CD4-positive, alpha-beta memory T cell (primary cell): ENCODE measurements at regions of chr5 and their contacts with region 1.

Region 1: GRCh38 chr5:148957591-148958202 is 105.2 kb downstream of the SH3TC2 start:
- DNase-seq: peak; percentile 31 to 45 (median 40)
- H3K4me3 ChIP-seq: no peak overlapping the region
- H3K4me3 Mint-ChIP-seq: no peak overlapping the region
- H3K27ac ChIP-seq: no peak overlapping the region
- H3K27ac Mint-ChIP-seq: no peak overlapping the region
- H3K4me1 ChIP-seq: no peaks in the 10 kb centered on the region
- H3K4me1 Mint-ChIP-seq: peaks cover 0 to 3% (median under 1%) of the 10 kb centered on the region in 4 donors
- H3K27me3 ChIP-seq: no peaks in the 10 kb centered on the region
- H3K27me3 Mint-ChIP-seq: peaks cover 0 to 3% of the 10 kb centered on the region in 2 donors

Region 2: GRCh38 chr5:148740966-148741742 is 216.5 kb before region 1 on chr5:
- CTCF ChIA-PET with region 1: interaction called, 228 read pairs
- POLR2A ChIA-PET with region 1: interaction called, 3 read pairs
- intact Hi-C with region 1: loop called (anchors 1 kb)
- DNase-seq: peak in 4 of 5 donors; percentile 28 to 35 (median 32)
- H3K4me3 ChIP-seq: no peak overlapping the region
- H3K4me3 Mint-ChIP-seq: no peak overlapping the region
- H3K27ac ChIP-seq: no peak overlapping the region
- H3K27ac Mint-ChIP-seq: no peak overlapping the region
- H3K4me1 ChIP-seq: no peaks in the 10 kb centered on the region
- H3K4me1 Mint-ChIP-seq: no peaks in the 10 kb centered on the region
- H3K27me3 ChIP-seq: no peaks in the 10 kb centered on the region
- H3K27me3 Mint-ChIP-seq: peaks cover 4 to 15% of the 10 kb centered on the region in 2 donors

Region 3: GRCh38 chr5:148805326-148806290 is 152.1 kb before region 1 on chr5:
- CTCF ChIA-PET with region 1: interaction called, 16 read pairs
- POLR2A ChIA-PET with region 1: no interaction called
- intact Hi-C with region 1: no loop called
- DNase-seq: no peak
- H3K4me3 ChIP-seq: no peak overlapping the region
- H3K4me3 Mint-ChIP-seq: peak overlapping the region in 1 of 8 donors; percentile 51
- H3K27ac ChIP-seq: no peak overlapping the region
- H3K27ac Mint-ChIP-seq: peak overlapping the region in 2 of 7 donors; percentile 23 to 43
- H3K4me1 ChIP-seq: peaks cover 24% of the 10 kb centered on the region
- H3K4me1 Mint-ChIP-seq: peaks cover 17 to 33% (median 25%) of the 10 kb centered on the region in 4 donors
- H3K27me3 ChIP-seq: no peaks in the 10 kb centered on the region
- H3K27me3 Mint-ChIP-seq: peaks cover 4 to 12% of the 10 kb centered on the region in 2 donors

Region 4: GRCh38 chr5:148826053-148826738 is 131.5 kb before region 1 on chr5 and contains the start of gene ADRB2:
- CTCF ChIA-PET with region 1: interaction called, 77 read pairs
- POLR2A ChIA-PET with region 1: interaction called, 9 read pairs
- intact Hi-C with region 1: loop called (anchors 1 kb)
- DNase-seq: peak; percentile 87 to 93 (median 88)
- H3K4me3 ChIP-seq: peak within 1 kb of the TSS; percentile 72 to 92
- H3K4me3 Mint-ChIP-seq: peak within 1 kb of the TSS; percentile 86 to 95 (median 90)
- H3K27ac ChIP-seq: peak within 1 kb of the TSS; percentile 67
- H3K27ac Mint-ChIP-seq: peak within 1 kb of the TSS; percentile 79 to 97 (median 93)
- H3K4me1 ChIP-seq: peaks cover 39% of the 10 kb centered on the region
- H3K4me1 Mint-ChIP-seq: peaks cover 19 to 61% (median 35%) of the 10 kb centered on the region in 4 donors
- H3K27me3 ChIP-seq: no peaks in the 10 kb centered on the region
- H3K27me3 Mint-ChIP-seq: no peaks in the 10 kb centered on the region
- total RNA-seq, gene ADRB2: 5.6 to 6.1 TPM

Region 5: DNA sequence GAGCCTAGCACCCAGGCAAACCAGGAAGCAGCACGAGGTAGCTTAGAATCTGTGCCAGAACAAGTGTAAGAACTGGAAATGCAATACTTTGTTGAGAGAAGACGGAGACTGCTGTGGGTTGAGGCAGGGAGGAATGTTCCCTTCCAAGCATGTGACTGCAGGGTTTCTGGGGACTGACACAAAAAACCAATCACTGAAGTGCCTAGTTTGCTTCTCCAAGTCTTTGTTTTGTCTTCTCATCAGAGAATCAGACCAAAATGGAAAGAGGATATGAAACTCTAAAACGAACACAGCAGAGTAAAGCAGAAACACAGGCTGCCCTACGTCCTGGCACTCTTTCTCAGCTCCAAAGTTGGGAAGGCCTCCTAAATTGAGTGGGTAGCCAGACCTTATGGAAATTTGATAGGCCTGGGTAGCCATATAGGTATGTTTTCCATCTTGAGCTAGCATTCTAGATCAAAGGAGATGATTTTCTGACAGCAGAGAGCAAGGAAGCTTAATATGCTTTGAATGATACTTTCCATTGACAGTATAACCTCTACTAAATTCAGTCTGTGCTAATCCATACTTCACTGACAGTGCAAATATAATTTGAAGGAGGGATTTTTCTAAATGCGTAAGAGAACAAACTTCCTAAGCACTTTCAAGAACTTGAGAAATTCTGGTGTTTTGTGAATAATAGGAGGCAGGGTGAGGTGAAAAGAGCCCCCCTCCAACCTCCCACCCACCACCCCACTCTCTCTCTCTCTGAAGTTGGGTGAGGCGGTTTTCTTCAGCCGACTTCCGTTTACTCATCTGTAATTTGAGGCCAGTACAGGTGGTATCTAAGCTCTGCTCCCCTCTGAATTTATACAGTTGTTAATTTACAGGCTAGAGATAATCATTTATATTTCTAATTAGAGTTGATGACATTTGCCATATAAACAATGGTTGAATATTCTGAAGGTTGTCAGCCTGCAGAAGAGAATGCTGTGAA is 125.8 kb before region 1 on chr5:
- CTCF ChIA-PET with region 1: interaction called, 21 read pairs
- POLR2A ChIA-PET with region 1: interaction called, 9 read pairs
- intact Hi-C with region 1: no loop called
- DNase-seq: no peak
- H3K4me3 ChIP-seq: no peak overlapping the region
- H3K4me3 Mint-ChIP-seq: peak overlapping the region; percentile 52 to 95 (median 86)
- H3K27ac ChIP-seq: no peak overlapping the region
- H3K27ac Mint-ChIP-seq: peak overlapping the region; percentile 33 to 75 (median 62)
- H3K4me1 ChIP-seq: peaks cover 54% of the 10 kb centered on the region
- H3K4me1 Mint-ChIP-seq: peaks cover 34 to 96% (median 62%) of the 10 kb centered on the region in 4 donors
- H3K27me3 ChIP-seq: no peaks in the 10 kb centered on the region
- H3K27me3 Mint-ChIP-seq: peaks cover 0 to 2% of the 10 kb centered on the region in 2 donors

Region 6: DNA sequence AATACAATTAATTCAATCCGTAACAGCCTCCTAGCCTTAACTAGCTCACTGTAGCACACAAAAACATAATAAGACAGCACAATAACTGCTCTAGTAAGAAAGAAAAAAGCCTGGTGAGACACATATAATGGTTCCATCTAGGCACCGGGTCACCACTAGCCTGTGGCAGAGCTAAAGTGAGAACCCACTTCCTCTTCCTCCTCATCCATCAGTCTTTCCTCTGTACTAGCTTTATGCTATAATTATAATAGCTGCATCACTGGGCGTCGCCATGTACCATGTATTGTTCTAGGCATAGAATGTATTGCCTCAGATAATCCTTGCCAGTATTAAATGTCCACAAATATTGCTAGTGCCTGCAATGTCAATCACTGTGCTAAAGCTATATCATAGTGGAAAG is 108.2 kb before region 1 on chr5:
- CTCF ChIA-PET with region 1: interaction called, 44 read pairs
- POLR2A ChIA-PET with region 1: interaction called, 4 read pairs
- intact Hi-C with region 1: loop called (anchors 5 kb)
- DNase-seq: peak; percentile 49 to 71 (median 60)
- H3K4me3 ChIP-seq: no peak overlapping the region
- H3K4me3 Mint-ChIP-seq: peak overlapping the region in 7 of 8 donors; percentile 1 to 87 (median 64)
- H3K27ac ChIP-seq: peak overlapping the region; percentile 30
- H3K27ac Mint-ChIP-seq: peak overlapping the region; percentile 6 to 98 (median 92)
- H3K4me1 ChIP-seq: peaks cover 84% of the 10 kb centered on the region
- H3K4me1 Mint-ChIP-seq: peaks cover 55 to 91% (median 68%) of the 10 kb centered on the region in 4 donors
- H3K27me3 ChIP-seq: no peaks in the 10 kb centered on the region
- H3K27me3 Mint-ChIP-seq: no peaks in the 10 kb centered on the region

Region 7: GRCh38 chr5:148981353-148981752 is 23.7 kb after region 1 on chr5:
- CTCF ChIA-PET with region 1: interaction called, 14 read pairs
- POLR2A ChIA-PET with region 1: no interaction called
- intact Hi-C with region 1: no loop called
- DNase-seq: no peak
- H3K4me3 ChIP-seq: no peak overlapping the region
- H3K4me3 Mint-ChIP-seq: no peak overlapping the region
- H3K27ac ChIP-seq: no peak overlapping the region
- H3K27ac Mint-ChIP-seq: no peak overlapping the region
- H3K4me1 ChIP-seq: no peaks in the 10 kb centered on the region
- H3K4me1 Mint-ChIP-seq: no peaks in the 10 kb centered on the region
- H3K27me3 ChIP-seq: no peaks in the 10 kb centered on the region
- H3K27me3 Mint-ChIP-seq: no peaks in the 10 kb centered on the region